ENCODE measurements at regions of chr1 and their contacts with region 1.

Region 1: GRCh38 chr1:205584732-205585131 is 47.1 kb downstream of the ELK4 start:
- DNase-seq: no peak
- ATAC-seq: no peak

Region 2: DNA sequence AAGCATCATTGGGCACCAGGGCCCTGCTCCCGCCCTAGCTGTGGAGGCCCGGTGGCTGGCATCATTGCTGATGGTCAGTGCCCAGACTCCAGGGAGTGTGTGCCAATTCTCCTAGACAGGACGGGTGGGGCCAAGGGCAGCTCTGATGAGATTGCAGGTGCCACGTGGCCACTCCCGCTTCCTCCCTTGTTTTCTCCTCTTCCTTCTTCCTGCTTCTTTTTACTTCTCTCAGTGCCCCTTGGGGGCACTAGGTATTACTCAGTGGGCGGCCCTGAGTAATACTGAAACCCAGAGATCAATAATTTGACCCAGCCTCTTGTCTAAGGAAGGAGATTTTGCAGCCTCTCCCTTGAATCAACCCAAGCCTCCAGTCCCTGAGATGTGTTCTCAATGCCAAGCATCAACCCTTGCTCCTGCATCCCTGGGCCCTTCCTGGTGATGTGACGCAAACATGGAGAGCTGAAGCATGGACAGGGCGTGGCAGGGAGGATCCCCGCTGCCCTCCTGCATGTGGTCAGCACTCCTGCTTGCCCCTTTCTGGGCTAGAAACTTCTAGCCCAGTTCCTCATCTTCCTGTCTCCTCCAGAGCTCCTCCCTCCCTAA is 47.9 kb before region 1 on chr1:
- intact Hi-C with region 1: loop called in 1 of 2 experiments (anchors 5 kb)
- DNase-seq: no peak
- ATAC-seq: peak; percentile 72 to 79

Measured in left cardiac atrium (tissue), 4 donors.